PC-9 (cell line): ENCODE measurements at regions of chr6 and their contacts with region 1.

Region 1: DNA sequence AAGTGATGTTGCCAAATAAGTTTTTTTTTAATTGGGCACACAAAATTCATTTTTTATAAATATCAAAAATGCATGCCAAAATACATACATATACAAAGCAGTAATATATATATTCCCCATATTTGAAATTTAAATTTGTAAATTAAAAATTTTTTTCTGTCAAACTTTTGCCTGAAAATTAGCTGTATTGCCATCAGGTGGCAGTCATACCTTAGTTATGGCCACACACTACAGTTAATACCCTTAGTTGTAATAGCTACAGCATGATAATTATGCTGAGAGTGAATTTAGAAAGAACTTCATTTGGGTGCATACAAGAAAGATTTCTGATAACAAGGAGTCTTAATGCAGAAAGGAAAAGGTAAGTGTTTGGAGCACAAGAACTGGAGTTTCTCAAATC is 46.2 kb upstream of the SDHAF4 start:
- DNase-seq: no peak
- H3K4me3 ChIP-seq: no peak overlapping the region
- H3K27ac ChIP-seq: no peak overlapping the region
- H3K4me1 ChIP-seq: no peaks in the 10 kb centered on the region
- H3K27me3 ChIP-seq: no peaks in the 10 kb centered on the region
- CTCF ChIP-seq: peak; percentile 73

Region 2: DNA sequence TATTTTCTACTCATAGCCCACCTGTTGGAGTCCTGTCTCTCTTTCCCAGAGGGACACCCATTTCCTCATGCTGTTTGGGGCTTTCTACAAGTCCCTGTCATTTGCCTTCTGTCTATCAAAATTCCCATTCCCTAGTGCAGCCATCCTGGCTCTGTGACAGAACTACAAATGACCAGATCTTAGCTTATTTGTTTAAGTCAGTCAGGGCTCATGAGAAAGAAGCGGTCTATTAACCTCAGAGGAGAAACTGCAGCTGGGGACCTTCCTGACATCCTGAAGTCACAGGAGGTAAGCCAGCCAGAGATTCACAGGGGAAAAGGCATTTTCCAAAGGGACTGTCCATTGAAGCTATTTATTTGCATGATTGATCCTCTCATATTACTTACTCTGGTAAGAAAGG is 216.0 kb before region 1 on chr6:
- CTCF ChIA-PET with region 1: interaction called, 4 read pairs
- POLR2A ChIA-PET with region 1: no interaction called
- intact Hi-C with region 1: loop called (anchors 10 kb)
- DNase-seq: no peak
- H3K4me3 ChIP-seq: no peak overlapping the region
- H3K27ac ChIP-seq: no peak overlapping the region
- H3K4me1 ChIP-seq: no peaks in the 10 kb centered on the region
- H3K27me3 ChIP-seq: peaks cover 64% of the 10 kb centered on the region
- CTCF ChIP-seq: no peak

Region 3: GRCh38 chr6:70310063-70310694 is 210.4 kb before region 1 on chr6:
- CTCF ChIA-PET with region 1: interaction called, 11 read pairs
- POLR2A ChIA-PET with region 1: no interaction called
- intact Hi-C with region 1: loop called (anchors 10 kb)
- DNase-seq: peak in 1 of 2 experiments; percentile 48
- H3K4me3 ChIP-seq: no peak overlapping the region
- H3K27ac ChIP-seq: no peak overlapping the region
- H3K4me1 ChIP-seq: no peaks in the 10 kb centered on the region
- H3K27me3 ChIP-seq: peaks cover 49% of the 10 kb centered on the region
- CTCF ChIP-seq: peak; percentile 78

Region 4: GRCh38 chr6:70686548-70687133 is 166.1 kb after region 1 on chr6:
- CTCF ChIA-PET with region 1: interaction called, 12 read pairs
- POLR2A ChIA-PET with region 1: no interaction called
- intact Hi-C with region 1: loop called (anchors 1 kb)
- DNase-seq: peak in 1 of 2 experiments; percentile 40
- H3K4me3 ChIP-seq: no peak overlapping the region
- H3K27ac ChIP-seq: no peak overlapping the region
- H3K4me1 ChIP-seq: peaks cover 6% of the 10 kb centered on the region
- H3K27me3 ChIP-seq: no peaks in the 10 kb centered on the region
- CTCF ChIP-seq: peak; percentile 90

Region 5: GRCh38 chr6:70884074-70884983 is 363.8 kb after region 1 on chr6:
- CTCF ChIA-PET with region 1: no interaction called
- POLR2A ChIA-PET with region 1: no interaction called
- intact Hi-C with region 1: loop called (anchors 2 kb)
- DNase-seq: peak in 1 of 2 experiments; percentile 52
- H3K4me3 ChIP-seq: no peak overlapping the region
- H3K27ac ChIP-seq: no peak overlapping the region
- H3K4me1 ChIP-seq: no peaks in the 10 kb centered on the region
- H3K27me3 ChIP-seq: no peaks in the 10 kb centered on the region; the same call in 1 of the 2 replicates
- CTCF ChIP-seq: peak; percentile 96

Region 6: GRCh38 chr6:70955441-70956190 is 435.0 kb after region 1 on chr6:
- CTCF ChIA-PET with region 1: interaction called, 7 read pairs
- POLR2A ChIA-PET with region 1: no interaction called
- intact Hi-C with region 1: loop called (anchors 5 kb)
- DNase-seq: peak in 1 of 2 experiments; percentile 79
- H3K4me3 ChIP-seq: peak overlapping the region; percentile 8; the same call in 1 of the 2 replicates
- H3K27ac ChIP-seq: no peak overlapping the region
- H3K4me1 ChIP-seq: no peaks in the 10 kb centered on the region
- H3K27me3 ChIP-seq: peaks cover 14% of the 10 kb centered on the region
- CTCF ChIP-seq: peak; percentile 71